Ascending aorta (tissue), 2 donors: ENCODE measurements at regions of chr11 and their contacts with region 1.

Region 1: DNA sequence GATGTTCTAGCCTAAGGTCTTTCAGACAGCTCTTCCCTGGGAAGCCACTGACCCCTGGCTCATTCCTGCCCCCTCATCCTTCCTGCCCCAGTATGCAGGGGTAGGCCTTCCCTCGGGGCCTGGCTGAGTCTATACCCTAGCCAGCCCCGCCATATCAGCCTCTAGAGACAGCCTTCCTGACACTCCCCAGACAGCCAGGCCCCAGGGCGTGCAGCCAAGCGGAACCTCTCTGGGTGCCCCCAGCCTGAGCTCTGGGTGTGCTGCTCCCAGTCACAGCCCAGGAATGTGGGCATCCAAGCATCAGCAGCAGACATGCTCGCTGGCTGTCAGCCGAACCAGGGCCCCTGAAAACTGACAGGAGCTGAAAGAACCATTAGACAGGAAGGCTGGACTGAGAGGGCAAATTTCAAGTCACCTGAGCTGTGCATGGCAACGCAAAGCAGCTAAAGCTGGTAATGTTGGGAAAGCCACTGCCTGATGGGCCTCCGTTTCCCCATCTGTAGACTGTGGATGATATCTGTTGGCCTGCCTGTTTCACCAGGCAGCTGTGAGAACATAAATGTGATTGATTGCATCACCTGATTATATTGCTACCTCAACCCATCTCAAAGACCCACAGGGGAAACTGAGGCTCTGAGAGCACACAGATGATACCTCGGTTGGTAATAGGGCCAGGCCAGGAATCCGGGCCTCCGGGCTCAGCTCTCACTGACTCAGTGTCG is 93.2 kb downstream of the LRRC32 start:
- DNase-seq: peak in 1 of 2 donors; percentile 79
- H3K4me3 ChIP-seq: no peak overlapping the region
- H3K27ac ChIP-seq: peak overlapping the region; percentile 82 to 85
- H3K4me1 ChIP-seq: peaks cover 11 to 31% of the 10 kb centered on the region in 2 donors
- H3K27me3 ChIP-seq: no peaks in the 10 kb centered on the region
- CTCF ChIP-seq: no peak

Region 2: DNA sequence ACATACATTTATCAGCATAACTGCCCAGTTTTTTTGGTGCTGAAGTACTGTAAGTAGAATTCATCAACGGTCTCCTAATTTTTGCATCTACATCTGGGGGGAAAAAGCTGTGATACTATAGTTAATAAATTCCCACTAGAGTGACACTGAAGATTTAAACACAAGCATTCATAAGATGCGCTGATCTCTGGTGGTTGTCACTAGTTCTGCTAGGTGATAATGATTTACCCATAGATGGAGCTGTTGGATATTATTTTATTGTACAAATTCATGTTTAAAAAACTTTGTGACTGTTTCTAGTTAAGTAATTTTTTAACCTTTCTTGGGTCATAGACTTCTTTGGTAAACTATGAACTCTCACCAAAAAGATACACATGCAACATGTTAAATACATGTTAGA is 26.0 kb before region 1 on chr11:
- intact Hi-C with region 1: loop called (anchors 2 kb)
- DNase-seq: no peak
- H3K4me3 ChIP-seq: no peak overlapping the region
- H3K27ac ChIP-seq: no peak overlapping the region
- H3K4me1 ChIP-seq: no peaks in the 10 kb centered on the region
- H3K27me3 ChIP-seq: no peaks in the 10 kb centered on the region
- CTCF ChIP-seq: peak in 2 of 3 experiments; percentile 4 to 40

Region 3: GRCh38 chr11:76610871-76611475 is 33.6 kb after region 1 on chr11:
- intact Hi-C with region 1: loop called (anchors 2 kb)
- DNase-seq: no peak
- H3K4me3 ChIP-seq: no peak overlapping the region
- H3K27ac ChIP-seq: peak overlapping the region; percentile 58 to 63
- H3K4me1 ChIP-seq: peaks cover 20 to 52% of the 10 kb centered on the region in 2 donors
- H3K27me3 ChIP-seq: no peaks in the 10 kb centered on the region
- CTCF ChIP-seq: peak in 1 of 3 experiments; percentile 38

Region 4: DNA sequence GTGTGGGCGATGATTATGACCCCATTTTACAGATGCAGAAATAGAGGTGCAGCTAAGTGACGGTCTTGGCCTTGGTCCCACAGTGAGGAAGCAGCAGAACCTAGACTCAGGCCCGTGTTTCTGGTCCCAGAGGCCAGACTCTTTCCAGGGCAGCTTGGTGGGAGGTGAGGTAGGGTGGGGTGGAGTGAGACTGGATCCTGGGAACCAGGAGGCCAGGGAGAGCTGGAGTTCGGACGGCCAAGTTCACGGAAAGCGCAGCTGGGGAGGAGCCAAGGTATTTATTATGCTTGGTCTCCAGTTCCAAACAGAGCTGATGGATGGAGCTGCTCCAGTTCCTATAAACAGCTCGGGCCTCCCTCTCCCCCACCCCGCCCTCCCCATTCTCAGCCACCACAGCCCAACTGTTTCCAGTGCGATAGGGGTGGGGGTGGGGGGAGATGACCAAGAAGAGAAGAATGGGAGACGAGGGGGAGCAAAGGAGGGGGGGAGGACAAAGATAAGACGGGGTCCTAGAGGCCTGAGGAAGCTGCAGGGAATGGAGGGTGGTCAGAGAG is 77.0 kb after region 1 on chr11:
- intact Hi-C with region 1: loop called (anchors 5 kb)
- DNase-seq: peak in 1 of 2 donors; percentile 92
- H3K4me3 ChIP-seq: peak overlapping the region in 1 of 2 donors; percentile 24
- H3K27ac ChIP-seq: peak overlapping the region; percentile 86 to 91
- H3K4me1 ChIP-seq: peaks cover 26 to 60% of the 10 kb centered on the region in 2 donors
- H3K27me3 ChIP-seq: no peaks in the 10 kb centered on the region
- CTCF ChIP-seq: no peak